Head of caudate nucleus (tissue), 42 donors: ENCODE measurements at regions of chr10 and their contacts with region 1.

Region 1: GRCh38 chr10:123994417-123995081 is 98.8 kb downstream of the CHST15 start:
- DNase-seq: peak; percentile 60 to 94 (median 86)

Region 2: GRCh38 chr10:123862421-123863182 is 131.9 kb before region 1 on chr10:
- intact Hi-C with region 1: no loop called
- DNase-seq: no peak

Region 3: DNA sequence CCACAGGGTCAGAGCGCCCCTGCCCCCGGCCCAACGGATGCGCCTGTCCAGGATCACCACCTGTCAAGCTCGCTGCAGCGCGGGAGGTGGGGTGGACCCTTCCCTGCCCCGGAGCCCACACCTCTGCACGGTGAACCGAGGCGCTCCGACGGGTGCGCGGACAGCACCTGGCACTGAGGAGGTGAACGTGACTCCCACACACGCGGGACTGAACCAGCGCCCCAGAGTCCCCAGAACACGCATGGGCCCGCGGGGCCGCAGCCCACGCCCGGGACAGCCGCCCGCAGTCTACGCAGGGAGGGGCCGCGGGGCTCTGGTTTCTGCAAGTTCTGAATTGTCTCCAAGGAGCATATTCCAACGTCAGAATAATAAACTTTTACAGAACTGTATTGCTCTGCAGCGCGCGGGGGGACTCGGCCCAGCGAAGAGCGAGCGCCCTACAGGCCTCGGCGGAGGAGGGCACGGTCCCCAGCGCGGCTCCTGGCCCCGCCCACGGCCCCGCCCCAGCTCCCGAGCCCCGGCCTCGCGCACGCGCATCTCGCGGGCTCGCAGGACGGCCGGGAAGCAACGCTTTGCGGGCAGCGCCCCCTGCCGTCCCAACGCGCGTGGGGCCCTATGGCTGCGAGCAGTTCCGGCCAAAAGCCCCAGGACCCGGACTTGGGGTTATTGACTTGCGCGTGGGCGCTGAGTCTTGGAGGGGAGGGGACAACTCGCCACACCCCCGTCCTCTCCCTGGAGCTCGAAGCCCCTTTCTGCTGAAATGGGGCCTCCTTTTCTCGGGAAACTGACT is 394.5 kb after region 1 on chr10:
- intact Hi-C with region 1: loop called (anchors 1 kb)
- DNase-seq: peak; percentile 66 to 96 (median 92)